MCF 10A (cell line): ENCODE measurements at regions of chrX and their contacts with region 1.

Region 1: GRCh38 chrX:117510453-117510852 is 606.2 kb downstream of the KLHL13 start:
- DNase-seq: peak; percentile 48
- H3K4me3 Mint-ChIP-seq: no peak overlapping the region
- H3K27ac Mint-ChIP-seq: no peak overlapping the region
- H3K4me1 Mint-ChIP-seq: no peaks in the 10 kb centered on the region
- H3K27me3 Mint-ChIP-seq: no peaks in the 10 kb centered on the region
- CTCF ChIP-seq: peak; percentile 28

Region 2: GRCh38 chrX:116749943-116750342 is 760.5 kb before region 1 on chrX:
- CTCF ChIA-PET with region 1: interaction called, 6 read pairs
- POLR2A ChIA-PET with region 1: no interaction called
- intact Hi-C with region 1: loop called (anchors 2 kb)
- DNase-seq: peak; percentile 77
- H3K4me3 Mint-ChIP-seq: no peak overlapping the region
- H3K27ac Mint-ChIP-seq: peak overlapping the region; percentile 44
- H3K4me1 Mint-ChIP-seq: peaks cover 12% of the 10 kb centered on the region
- H3K27me3 Mint-ChIP-seq: peaks cover 14% of the 10 kb centered on the region
- CTCF ChIP-seq: peak; percentile 10

Region 3: GRCh38 chrX:117636826-117637225 is 126.4 kb after region 1 on chrX:
- CTCF ChIA-PET with region 1: no interaction called
- POLR2A ChIA-PET with region 1: no interaction called
- intact Hi-C with region 1: no loop called
- DNase-seq: no peak
- H3K4me3 Mint-ChIP-seq: no peak overlapping the region
- H3K27ac Mint-ChIP-seq: no peak overlapping the region
- H3K4me1 Mint-ChIP-seq: no peaks in the 10 kb centered on the region
- H3K27me3 Mint-ChIP-seq: no peaks in the 10 kb centered on the region
- CTCF ChIP-seq: no peak

Region 4: GRCh38 chrX:118226090-118226428 is 715.6 kb after region 1 on chrX:
- CTCF ChIA-PET with region 1: interaction called, 3 read pairs
- POLR2A ChIA-PET with region 1: no interaction called
- intact Hi-C with region 1: loop called (anchors 10 kb)
- DNase-seq: peak; percentile 50
- H3K4me3 Mint-ChIP-seq: peak overlapping the region; percentile 55
- H3K27ac Mint-ChIP-seq: peak overlapping the region; percentile 77
- H3K4me1 Mint-ChIP-seq: peaks cover 14% of the 10 kb centered on the region
- H3K27me3 Mint-ChIP-seq: peaks cover 29% of the 10 kb centered on the region
- CTCF ChIP-seq: peak; percentile 53